ENCODE measurements at regions of chr10 and their contacts with region 1.

Region 1: DNA sequence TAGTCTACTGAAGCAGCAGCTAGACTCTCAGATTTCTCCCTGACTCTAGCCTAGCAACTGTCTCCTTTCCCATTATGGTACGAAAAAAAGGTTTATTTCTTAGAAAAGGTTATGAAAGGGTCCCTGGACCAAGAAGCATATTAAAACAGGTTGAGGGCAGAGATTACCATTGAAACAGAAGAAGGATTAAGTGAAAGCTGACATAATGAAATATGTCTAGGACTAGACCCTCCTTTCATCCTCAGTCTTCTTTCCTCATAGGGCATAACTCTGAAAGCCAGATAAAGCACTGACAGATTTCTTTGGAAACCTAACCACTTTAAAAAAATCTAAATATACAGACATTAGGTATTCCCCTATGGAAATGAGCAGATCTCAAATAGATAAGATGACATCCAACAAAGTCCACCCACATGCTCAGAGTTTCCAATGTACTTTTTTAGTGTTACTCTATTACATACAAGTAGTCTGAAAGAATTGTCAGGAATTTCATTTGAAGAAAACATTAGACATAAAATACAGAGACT is 58.6 kb downstream of the JMJD1C start:
- DNase-seq: no peak
- ATAC-seq: no peak
- H3K4me3 ChIP-seq: no peak overlapping the region
- H3K4me3 Mint-ChIP-seq: no peak overlapping the region
- H3K27ac ChIP-seq: no peak overlapping the region
- H3K27ac Mint-ChIP-seq: no peak overlapping the region
- H3K4me1 ChIP-seq: no peaks in the 10 kb centered on the region
- H3K4me1 Mint-ChIP-seq: peaks cover 24 to 31% (median 28%) of the 10 kb centered on the region in 3 donors
- H3K27me3 ChIP-seq: no peaks in the 10 kb centered on the region
- H3K27me3 Mint-ChIP-seq: no peaks in the 10 kb centered on the region

Region 2: DNA sequence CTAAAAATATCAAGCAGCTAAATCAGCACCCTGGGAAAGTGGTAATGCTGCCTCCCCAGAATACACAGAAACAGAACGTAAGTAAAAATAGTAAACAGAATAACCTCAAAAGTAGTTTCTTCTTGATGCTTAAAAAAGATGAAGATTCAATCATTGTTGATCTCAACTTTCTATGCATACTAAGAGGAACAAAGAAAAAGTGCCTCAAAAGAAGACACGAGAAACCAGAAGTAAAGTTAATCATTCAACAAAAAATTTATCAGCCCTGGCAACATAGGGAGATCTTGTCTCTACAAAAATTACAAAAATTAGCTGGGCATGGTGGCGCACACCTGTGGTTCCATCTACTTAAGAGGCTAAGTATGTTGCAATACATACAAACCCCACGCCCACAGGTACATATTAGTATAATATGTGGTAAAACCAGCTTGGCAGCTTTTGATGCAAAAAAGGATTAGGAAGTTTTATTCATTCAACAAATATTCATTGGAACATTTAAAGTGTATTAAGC is 120.4 kb before region 1 on chr10:
- CTCF ChIA-PET with region 1: no interaction called
- POLR2A ChIA-PET with region 1: no interaction called
- DNase-seq: no peak
- ATAC-seq: no peak
- H3K4me3 ChIP-seq: no peak overlapping the region
- H3K4me3 Mint-ChIP-seq: no peak overlapping the region
- H3K27ac ChIP-seq: no peak overlapping the region
- H3K27ac Mint-ChIP-seq: no peak overlapping the region
- H3K4me1 ChIP-seq: no peaks in the 10 kb centered on the region
- H3K4me1 Mint-ChIP-seq: peaks cover 10 to 18% (median 11%) of the 10 kb centered on the region in 3 donors
- H3K27me3 ChIP-seq: no peaks in the 10 kb centered on the region
- H3K27me3 Mint-ChIP-seq: no peaks in the 10 kb centered on the region

Region 3: DNA sequence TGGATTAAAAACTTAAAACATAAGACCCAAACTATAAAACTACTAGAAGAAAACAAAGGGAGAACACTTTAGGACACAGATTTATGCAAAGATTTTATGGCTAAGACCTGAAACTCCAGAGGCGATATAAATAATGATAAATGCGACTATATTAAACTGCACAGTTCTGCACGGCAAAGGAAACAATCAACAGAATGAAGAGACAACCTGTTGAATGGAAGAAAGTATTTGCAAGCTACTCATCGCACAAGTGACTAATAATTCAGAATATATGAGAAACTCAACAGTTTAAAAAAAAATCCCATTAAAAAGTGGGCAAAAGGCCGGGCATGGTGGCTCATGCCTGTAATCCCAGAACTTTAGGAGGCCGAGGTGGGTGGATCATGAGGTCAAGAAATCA is 15.0 kb before region 1 on chr10:
- CTCF ChIA-PET with region 1: no interaction called
- POLR2A ChIA-PET with region 1: interaction called in 1 of 2 experiments, 12 read pairs
- DNase-seq: no peak
- ATAC-seq: no peak
- H3K4me3 ChIP-seq: no peak overlapping the region
- H3K4me3 Mint-ChIP-seq: peak overlapping the region in 2 of 3 donors; percentile 24 to 25
- H3K27ac ChIP-seq: no peak overlapping the region
- H3K27ac Mint-ChIP-seq: peak overlapping the region; percentile 4 to 6
- H3K4me1 ChIP-seq: peaks cover 8% of the 10 kb centered on the region in 2 experiments
- H3K4me1 Mint-ChIP-seq: peaks cover 45 to 59% (median 50%) of the 10 kb centered on the region in 3 donors
- H3K27me3 ChIP-seq: no peaks in the 10 kb centered on the region
- H3K27me3 Mint-ChIP-seq: no peaks in the 10 kb centered on the region

Measured in T-cell (primary cell).